ENCODE measurements at regions of chr1 and their contacts with region 1.

Region 1: GRCh38 chr1:23979878-23980724 is at the start of gene SRSF10:
- DNase-seq: peak; percentile 100
- H3K4me3 ChIP-seq: peak within 1 kb of the TSS; percentile 96
- H3K27ac ChIP-seq: peak within 1 kb of the TSS; percentile 94
- H3K4me1 ChIP-seq: peaks cover 70% of the 10 kb centered on the region
- CTCF ChIP-seq: peak; percentile 45
- total RNA-seq, gene SRSF10: 229 and 293 TPM in 2 replicates

Region 2: DNA sequence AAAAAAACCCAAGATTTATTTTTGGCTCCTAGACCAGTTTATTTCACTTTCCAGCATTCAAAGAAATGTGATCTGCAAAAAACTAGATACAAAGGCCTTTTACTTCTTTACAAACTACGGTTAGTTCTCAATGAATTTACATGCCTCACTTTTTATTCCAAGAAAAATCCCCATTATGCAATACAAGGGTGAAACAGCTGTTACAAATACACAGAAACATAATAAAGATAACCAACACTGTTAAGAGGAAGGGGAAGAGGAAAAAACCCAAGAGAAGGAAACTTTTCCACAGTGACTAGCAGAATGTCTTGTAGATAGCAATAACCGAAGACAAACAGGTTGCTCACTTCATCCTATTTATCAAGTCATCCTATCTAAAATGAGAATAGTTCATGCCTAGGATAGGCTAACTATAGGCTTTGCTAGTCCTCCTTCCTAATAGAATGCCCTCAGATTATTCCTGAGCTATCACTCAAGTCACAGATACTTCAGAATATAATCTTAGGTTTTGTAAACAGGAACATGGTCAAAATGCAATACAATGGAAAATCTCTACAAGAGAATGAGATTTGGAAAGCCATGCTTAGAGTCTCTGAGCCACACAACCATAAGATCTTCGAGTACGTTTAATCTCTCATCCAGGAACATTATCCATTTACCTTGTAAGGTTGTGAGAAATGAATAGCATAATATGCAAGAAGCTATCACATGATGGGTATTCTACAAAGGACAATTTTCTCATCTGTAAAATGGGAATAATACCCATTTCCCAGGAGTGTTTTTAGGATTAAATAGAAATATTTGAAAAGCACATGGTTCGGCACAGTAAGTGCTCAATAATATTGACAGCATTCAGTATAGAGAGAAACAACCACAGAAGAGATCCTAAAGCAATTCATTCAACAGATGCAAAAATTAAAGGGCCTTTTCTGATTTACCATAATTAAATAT is 15.0 kb before region 1 on chr1:
- CTCF ChIA-PET with region 1: no interaction called
- POLR2A ChIA-PET with region 1: interaction called, 16 read pairs
- intact Hi-C with region 1: no loop called
- DNase-seq: no peak
- H3K4me3 ChIP-seq: no peak overlapping the region
- H3K27ac ChIP-seq: peak overlapping the region; percentile 55
- H3K4me1 ChIP-seq: peaks cover 49% of the 10 kb centered on the region
- CTCF ChIP-seq: no peak

Region 3: DNA sequence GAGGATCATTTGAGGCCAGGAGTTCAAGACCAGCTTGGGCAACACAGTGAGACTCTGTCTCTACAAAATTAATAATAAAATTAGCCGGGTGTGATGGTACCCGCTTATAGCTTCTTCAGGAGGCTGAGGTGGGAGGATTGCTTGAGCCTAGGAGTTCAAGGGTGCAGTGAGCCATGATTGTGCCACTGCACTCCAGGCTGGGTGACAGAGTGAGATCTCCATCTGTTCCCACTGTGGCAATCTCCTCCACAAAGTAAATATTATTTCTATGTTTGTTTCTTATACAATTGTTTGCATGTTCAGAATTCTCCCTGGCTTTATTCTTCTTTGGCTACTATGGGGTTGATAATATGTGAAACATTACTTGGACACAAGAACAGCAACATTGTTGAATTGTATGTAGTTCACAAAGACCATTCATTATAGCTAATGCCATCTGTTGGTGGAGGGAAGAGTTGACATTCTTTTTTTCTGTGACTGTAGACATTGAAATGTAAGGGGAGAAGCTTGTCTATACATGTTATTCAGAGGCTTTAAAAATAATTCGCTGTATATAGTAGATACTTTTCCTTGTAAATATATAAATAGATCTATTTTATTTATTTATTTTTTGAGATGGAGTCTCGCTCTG is 47.9 kb after region 1 on chr1:
- CTCF ChIA-PET with region 1: no interaction called
- POLR2A ChIA-PET with region 1: interaction called, 3 read pairs
- intact Hi-C with region 1: loop called (anchors 5 kb)
- DNase-seq: peak; percentile 58
- H3K4me3 ChIP-seq: no peak overlapping the region
- H3K27ac ChIP-seq: no peak overlapping the region
- H3K4me1 ChIP-seq: no peaks in the 10 kb centered on the region
- CTCF ChIP-seq: peak; percentile 85

Region 4: DNA sequence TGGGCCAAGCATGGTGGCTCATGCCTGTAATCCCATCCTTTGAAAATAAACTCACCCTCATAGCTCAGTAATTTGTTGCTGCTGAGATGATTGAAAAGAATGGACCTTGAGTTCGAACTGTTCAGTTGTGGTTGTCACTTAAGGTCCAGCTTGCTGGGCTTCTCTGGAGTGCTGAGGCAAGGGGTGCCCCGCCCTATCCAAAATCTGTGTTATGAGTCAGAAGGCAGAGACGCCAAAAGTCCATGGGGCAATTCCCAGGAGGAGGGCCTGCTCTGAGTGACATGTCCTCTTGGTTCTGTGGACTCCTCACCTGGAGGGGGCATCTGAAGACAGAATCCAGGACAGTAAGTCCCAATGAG is 67.0 kb after region 1 on chr1:
- CTCF ChIA-PET with region 1: no interaction called
- POLR2A ChIA-PET with region 1: no interaction called
- intact Hi-C with region 1: no loop called
- DNase-seq: no peak
- H3K4me3 ChIP-seq: no peak overlapping the region
- H3K27ac ChIP-seq: no peak overlapping the region
- H3K4me1 ChIP-seq: no peaks in the 10 kb centered on the region
- CTCF ChIP-seq: no peak